ENCODE measurements at regions of chr9 and their contacts with region 1.

Region 1: DNA sequence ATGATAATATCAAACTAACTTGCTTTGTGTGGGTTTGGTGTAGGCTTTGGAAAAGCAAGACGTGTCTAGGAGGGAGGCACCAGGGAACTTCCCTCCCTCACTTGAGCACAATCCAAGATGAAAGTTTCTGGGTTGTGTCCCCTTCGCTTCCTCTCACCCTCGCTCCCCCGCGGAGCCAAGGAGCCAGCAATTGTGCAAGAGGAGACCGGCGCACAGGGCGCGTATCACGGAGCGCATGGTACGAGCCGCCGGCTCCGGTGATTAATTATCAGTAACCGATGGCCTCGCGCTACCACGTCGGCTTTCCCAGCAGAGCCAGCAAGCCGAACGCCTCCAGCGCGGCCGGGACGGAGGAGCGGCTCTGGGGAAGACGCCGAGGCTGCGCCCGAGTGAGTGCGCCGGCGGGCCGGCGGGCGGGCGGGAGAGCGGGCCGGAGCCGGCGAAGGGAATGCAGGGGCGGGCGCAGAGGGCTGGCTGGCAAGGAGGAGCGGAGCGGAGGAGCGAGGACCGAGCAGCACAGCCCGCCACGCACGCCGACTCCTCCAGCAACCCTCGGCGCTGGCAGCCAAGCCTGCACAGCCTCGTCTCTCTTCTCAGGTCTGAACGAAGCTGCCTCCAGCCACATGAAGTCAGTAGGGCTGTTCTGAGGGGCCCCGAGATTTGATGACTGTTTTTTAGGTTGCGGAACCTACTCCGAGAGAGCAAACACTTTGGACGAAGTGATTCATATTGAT is 143.6 kb downstream of the BNC2 start:
- DNase-seq: peak; percentile 71
- H3K4me3 ChIP-seq: peak overlapping the region; percentile 51 to 68 (median 56)
- H3K27ac ChIP-seq: no peak overlapping the region
- H3K4me1 ChIP-seq: peaks cover 9% of the 10 kb centered on the region
- H3K27me3 ChIP-seq: peaks cover 8% of the 10 kb centered on the region
- CTCF ChIP-seq: no peak

Region 2: GRCh38 chr9:15873569-15874177 is 853.2 kb before region 1 on chr9:
- CTCF ChIA-PET with region 1: no interaction called
- dilution Hi-C with region 1: no loop called
- in situ Hi-C with region 1: no loop called
- intact Hi-C with region 1: loop called (anchors 1 kb)
- DNase-seq: peak; percentile 30
- H3K4me3 ChIP-seq: no peak overlapping the region
- H3K27ac ChIP-seq: peak overlapping the region; percentile 5
- H3K4me1 ChIP-seq: no peaks in the 10 kb centered on the region
- H3K27me3 ChIP-seq: no peaks in the 10 kb centered on the region
- CTCF ChIP-seq: peak; percentile 53 to 68

Region 3: GRCh38 chr9:16030513-16031185 is 696.2 kb before region 1 on chr9:
- CTCF ChIA-PET with region 1: no interaction called
- dilution Hi-C with region 1: no loop called
- in situ Hi-C with region 1: no loop called
- intact Hi-C with region 1: loop called (anchors 10 kb)
- DNase-seq: peak; percentile 91
- H3K4me3 ChIP-seq: no peak overlapping the region
- H3K27ac ChIP-seq: no peak overlapping the region
- H3K4me1 ChIP-seq: peaks cover 35% of the 10 kb centered on the region
- H3K27me3 ChIP-seq: no peaks in the 10 kb centered on the region
- CTCF ChIP-seq: no peak

Region 4: DNA sequence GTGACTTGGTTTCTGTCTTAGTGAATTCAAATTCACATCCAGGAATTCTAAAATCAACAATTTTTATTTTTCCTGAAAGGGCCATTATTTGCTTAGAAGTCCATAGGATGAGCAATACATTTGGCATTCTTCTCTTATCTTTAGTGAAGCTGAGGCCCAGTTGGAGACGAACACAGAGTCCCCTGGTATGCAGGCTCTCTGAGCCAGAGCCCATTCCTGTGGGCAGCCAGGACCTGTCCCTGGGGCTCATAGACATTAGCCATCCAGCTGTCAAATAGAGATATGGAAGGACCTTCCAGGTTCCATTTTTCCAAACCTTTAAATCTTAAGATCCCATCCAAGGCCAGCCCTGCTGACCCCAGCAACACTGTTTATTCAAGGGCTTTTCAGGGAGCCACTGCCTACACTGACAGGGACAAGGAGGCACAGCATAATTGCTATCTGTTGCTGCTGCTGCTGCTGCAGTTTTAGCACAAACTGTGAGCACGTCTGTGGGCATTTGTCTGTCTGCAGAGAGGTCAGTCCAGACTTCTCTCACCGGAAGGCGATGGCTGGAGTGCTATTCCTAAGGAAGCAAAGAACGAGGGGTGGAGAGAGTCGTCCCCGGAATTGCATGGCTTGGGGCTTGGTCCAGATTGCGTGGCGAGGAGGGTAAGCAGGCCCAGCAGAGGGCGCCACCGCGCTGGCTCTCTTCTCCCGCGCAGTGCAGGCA is 535.0 kb before region 1 on chr9:
- CTCF ChIA-PET with region 1: no interaction called
- dilution Hi-C with region 1: no loop called
- in situ Hi-C with region 1: no loop called
- intact Hi-C with region 1: loop called (anchors 5 kb)
- DNase-seq: peak; percentile 35
- H3K4me3 ChIP-seq: no peak overlapping the region
- H3K27ac ChIP-seq: no peak overlapping the region
- H3K4me1 ChIP-seq: peaks cover 6% of the 10 kb centered on the region
- H3K27me3 ChIP-seq: no peaks in the 10 kb centered on the region
- CTCF ChIP-seq: peak; percentile 61 to 88

Region 5: DNA sequence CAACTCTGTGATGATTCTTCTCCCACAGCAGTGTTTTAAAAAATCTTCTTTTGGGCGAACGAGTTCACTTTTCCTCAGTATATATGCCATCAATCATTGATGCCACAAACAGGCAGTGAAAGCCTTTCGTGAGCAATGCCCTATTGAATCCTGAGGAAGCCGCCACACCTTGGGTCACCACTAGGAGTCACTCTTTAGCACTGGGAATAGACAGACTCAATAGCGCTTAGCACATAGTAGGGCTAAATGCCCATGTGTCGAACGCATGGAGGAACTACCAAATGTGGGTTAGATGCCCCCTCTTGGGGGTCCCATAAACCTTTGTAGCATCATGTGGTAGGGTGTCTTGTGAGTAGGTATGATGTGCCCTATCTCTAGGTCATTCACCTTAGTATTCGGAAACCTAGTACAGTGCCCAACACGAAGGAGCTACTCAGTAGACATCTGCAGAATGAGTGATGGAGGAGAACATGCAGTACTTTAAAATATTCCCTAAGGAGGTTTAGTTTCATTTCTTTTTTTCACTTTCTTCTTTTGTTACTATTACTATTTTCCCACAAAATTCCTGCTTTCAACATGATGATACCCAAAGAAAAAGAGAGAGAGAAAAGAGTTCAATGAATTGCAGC is 460.1 kb before region 1 on chr9:
- CTCF ChIA-PET with region 1: no interaction called
- dilution Hi-C with region 1: no loop called
- in situ Hi-C with region 1: no loop called
- intact Hi-C with region 1: loop called (anchors 10 kb)
- DNase-seq: no peak
- H3K4me3 ChIP-seq: no peak overlapping the region
- H3K27ac ChIP-seq: no peak overlapping the region
- H3K4me1 ChIP-seq: peaks cover 5% of the 10 kb centered on the region
- H3K27me3 ChIP-seq: no peaks in the 10 kb centered on the region
- CTCF ChIP-seq: peak; percentile 50 to 57

Region 6: DNA sequence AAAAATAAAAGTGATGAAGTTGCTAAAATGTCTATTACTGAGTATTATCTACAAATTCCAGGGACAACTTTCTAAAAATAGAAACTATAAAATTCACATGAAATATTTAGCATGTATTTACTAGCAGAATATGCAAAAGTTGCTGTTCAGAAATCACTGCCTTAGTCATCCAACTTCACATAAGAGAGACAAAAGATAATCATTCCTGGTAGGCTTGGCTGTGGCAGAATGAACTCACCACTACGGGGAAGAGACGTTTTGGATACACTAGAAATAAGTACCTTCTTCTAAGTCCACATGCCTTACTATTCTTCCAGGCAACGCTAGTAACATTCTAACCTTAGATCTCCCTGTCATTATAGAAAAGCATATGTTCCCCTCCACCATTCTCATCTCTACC is 128.6 kb before region 1 on chr9:
- CTCF ChIA-PET with region 1: no interaction called
- dilution Hi-C with region 1: no loop called
- in situ Hi-C with region 1: no loop called
- intact Hi-C with region 1: loop called (anchors 10 kb)
- DNase-seq: no peak
- H3K4me3 ChIP-seq: no peak overlapping the region
- H3K27ac ChIP-seq: no peak overlapping the region
- H3K4me1 ChIP-seq: no peaks in the 10 kb centered on the region
- H3K27me3 ChIP-seq: no peaks in the 10 kb centered on the region
- CTCF ChIP-seq: no peak